MCF 10A (cell line): ENCODE measurements at regions of chr4 and their contacts with region 1.

Region 1: GRCh38 chr4:113468165-113469022 is 293.1 kb downstream of the CAMK2D start:
- DNase-seq: peak; percentile 98
- H3K4me3 Mint-ChIP-seq: peak overlapping the region; percentile 66
- H3K27ac Mint-ChIP-seq: peak overlapping the region; percentile 73
- H3K4me1 Mint-ChIP-seq: peaks cover 37% of the 10 kb centered on the region
- H3K27me3 Mint-ChIP-seq: no peaks in the 10 kb centered on the region
- CTCF ChIP-seq: no peak

Region 2: DNA sequence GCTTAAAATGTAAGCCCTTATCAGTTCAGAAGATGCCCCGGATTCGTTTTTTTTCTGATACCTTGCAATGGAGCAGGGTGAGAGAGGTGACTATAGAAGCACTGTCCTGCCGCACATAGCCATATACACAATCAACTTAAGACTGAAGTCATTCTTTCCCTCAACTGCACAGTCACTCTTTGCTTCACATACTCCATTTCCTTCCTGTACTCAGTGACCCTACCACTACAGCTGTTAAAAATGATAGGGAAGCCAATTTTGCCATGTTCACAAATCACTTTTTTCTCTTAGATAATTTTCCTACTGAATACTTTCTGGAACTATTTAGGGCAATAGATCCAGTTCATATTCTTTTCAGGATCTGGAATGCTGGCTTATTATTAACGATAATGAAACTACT is 119.0 kb before region 1 on chr4:
- CTCF ChIA-PET with region 1: no interaction called
- POLR2A ChIA-PET with region 1: no interaction called
- intact Hi-C with region 1: no loop called
- DNase-seq: no peak
- H3K4me3 Mint-ChIP-seq: no peak overlapping the region
- H3K27ac Mint-ChIP-seq: no peak overlapping the region
- H3K4me1 Mint-ChIP-seq: peaks cover 7% of the 10 kb centered on the region
- H3K27me3 Mint-ChIP-seq: no peaks in the 10 kb centered on the region
- CTCF ChIP-seq: no peak

Region 3: DNA sequence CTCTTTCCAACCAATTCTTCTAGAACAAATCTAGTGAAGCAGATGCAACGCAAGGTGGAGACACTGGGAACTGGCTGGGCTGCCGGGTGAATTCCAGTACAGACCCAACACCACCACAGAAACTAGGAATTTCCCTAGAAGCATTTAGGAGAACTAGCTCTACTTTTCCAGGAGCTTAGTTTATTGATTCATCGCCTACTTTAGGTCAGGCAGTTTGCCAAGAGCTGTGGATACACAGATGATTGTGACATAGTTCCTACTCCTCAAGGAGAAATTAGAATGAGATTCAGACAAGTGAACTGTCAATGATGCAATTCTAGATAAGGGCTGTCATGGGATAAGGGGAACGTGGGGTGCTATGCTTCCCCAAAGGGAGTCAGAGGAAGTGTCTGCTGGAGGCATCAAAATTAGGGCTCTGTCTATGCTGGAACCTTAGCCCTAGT is 56.9 kb before region 1 on chr4:
- CTCF ChIA-PET with region 1: interaction called, 7 read pairs
- POLR2A ChIA-PET with region 1: interaction called, 21 read pairs
- intact Hi-C with region 1: loop called (anchors 1 kb)
- DNase-seq: peak; percentile 94
- H3K4me3 Mint-ChIP-seq: no peak overlapping the region
- H3K27ac Mint-ChIP-seq: peak overlapping the region; percentile 53
- H3K4me1 Mint-ChIP-seq: peaks cover 9% of the 10 kb centered on the region
- H3K27me3 Mint-ChIP-seq: no peaks in the 10 kb centered on the region
- CTCF ChIP-seq: peak; percentile 18

Region 4: DNA sequence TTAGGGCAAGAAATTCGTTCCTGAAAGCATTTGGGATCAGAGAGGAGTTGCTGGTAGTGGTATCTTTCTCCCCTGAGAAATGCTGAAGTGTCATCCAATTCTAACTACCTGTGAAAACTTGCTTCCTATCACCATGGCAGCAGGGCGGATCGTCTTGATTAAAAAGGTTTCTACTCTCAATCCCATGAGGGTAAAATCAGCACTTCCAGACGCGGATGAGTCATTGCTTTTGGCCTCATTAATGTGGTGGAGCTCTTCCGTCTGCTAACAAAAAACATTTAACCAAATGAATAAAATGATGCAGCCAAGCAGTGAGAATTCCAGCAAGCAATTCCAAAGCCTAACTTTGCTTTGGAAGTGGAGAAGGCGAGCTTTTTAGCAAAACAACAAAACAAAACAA is 32.5 kb before region 1 on chr4:
- CTCF ChIA-PET with region 1: interaction called, 3 read pairs
- POLR2A ChIA-PET with region 1: interaction called, 13 read pairs
- intact Hi-C with region 1: no loop called
- DNase-seq: peak; percentile 87
- H3K4me3 Mint-ChIP-seq: peak overlapping the region; percentile 25
- H3K27ac Mint-ChIP-seq: peak overlapping the region; percentile 59
- H3K4me1 Mint-ChIP-seq: peaks cover 35% of the 10 kb centered on the region
- H3K27me3 Mint-ChIP-seq: no peaks in the 10 kb centered on the region
- CTCF ChIP-seq: no peak

Region 5: DNA sequence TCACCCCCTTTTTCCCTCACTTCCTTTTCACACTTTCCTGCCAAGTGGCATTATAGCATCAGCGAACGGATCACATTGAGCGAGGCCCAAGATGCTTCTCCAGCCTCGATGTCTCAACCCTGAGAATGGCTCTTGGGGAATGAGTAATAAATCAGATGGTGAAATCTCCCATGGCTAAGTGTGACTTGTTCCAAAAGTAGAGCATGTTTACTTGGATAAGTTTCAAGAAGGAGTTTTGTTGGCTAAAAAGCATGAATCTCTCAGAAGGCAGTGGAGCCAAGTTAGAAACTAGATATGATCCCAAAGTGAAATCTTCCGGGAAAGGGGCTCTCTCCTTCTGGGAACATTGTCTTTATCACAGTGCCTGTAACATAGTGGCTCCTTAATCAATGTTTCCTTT is 23.1 kb before region 1 on chr4:
- CTCF ChIA-PET with region 1: interaction called, 4 read pairs
- POLR2A ChIA-PET with region 1: interaction called, 88 read pairs
- intact Hi-C with region 1: loop called (anchors 2 kb)
- DNase-seq: peak; percentile 99
- H3K4me3 Mint-ChIP-seq: peak overlapping the region; percentile 60
- H3K27ac Mint-ChIP-seq: no peak overlapping the region
- H3K4me1 Mint-ChIP-seq: peaks cover 35% of the 10 kb centered on the region
- H3K27me3 Mint-ChIP-seq: no peaks in the 10 kb centered on the region
- CTCF ChIP-seq: no peak

Region 6: GRCh38 chr4:113513382-113513781 is 45.0 kb after region 1 on chr4:
- CTCF ChIA-PET with region 1: interaction called, 3 read pairs
- POLR2A ChIA-PET with region 1: interaction called, 14 read pairs
- intact Hi-C with region 1: no loop called
- DNase-seq: no peak
- H3K4me3 Mint-ChIP-seq: no peak overlapping the region
- H3K27ac Mint-ChIP-seq: no peak overlapping the region
- H3K4me1 Mint-ChIP-seq: no peaks in the 10 kb centered on the region
- H3K27me3 Mint-ChIP-seq: no peaks in the 10 kb centered on the region
- CTCF ChIP-seq: no peak

Region 7: DNA sequence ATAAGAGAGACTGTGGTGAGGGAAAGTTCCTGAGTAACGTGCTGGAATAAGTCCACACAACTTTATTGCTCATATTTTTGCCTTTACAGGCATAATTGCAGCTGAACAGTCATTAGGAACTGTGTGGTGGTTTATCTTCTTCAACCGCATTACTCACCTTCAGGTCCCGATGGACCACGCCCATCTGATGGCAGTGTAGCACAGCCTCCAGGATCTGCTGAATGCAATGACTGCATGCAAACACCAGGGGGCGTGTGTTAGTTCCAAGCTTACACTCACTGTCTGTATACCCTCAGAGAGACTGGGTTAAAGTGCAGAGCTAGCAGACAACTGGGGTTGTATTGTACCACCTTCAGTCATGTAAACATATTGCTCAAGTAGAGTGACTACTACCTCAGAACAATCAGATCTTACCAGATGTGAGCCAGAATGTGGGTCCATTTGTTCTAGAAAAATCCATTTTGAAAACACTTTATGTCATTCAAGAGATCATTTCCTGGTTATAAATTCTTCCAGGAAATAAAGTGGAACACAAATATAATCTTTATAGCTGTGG is 79.2 kb after region 1 on chr4:
- CTCF ChIA-PET with region 1: interaction called, 4 read pairs
- POLR2A ChIA-PET with region 1: interaction called, 9 read pairs
- intact Hi-C with region 1: loop called (anchors 1 kb)
- DNase-seq: peak; percentile 97
- H3K4me3 Mint-ChIP-seq: no peak overlapping the region
- H3K27ac Mint-ChIP-seq: no peak overlapping the region
- H3K4me1 Mint-ChIP-seq: peaks cover 8% of the 10 kb centered on the region
- H3K27me3 Mint-ChIP-seq: no peaks in the 10 kb centered on the region
- CTCF ChIP-seq: peak; percentile 93